Naive thymus-derived CD8-positive, alpha-beta T cell (primary cell): ENCODE measurements at regions of chr11 and their contacts with region 1.

Region 1: DNA sequence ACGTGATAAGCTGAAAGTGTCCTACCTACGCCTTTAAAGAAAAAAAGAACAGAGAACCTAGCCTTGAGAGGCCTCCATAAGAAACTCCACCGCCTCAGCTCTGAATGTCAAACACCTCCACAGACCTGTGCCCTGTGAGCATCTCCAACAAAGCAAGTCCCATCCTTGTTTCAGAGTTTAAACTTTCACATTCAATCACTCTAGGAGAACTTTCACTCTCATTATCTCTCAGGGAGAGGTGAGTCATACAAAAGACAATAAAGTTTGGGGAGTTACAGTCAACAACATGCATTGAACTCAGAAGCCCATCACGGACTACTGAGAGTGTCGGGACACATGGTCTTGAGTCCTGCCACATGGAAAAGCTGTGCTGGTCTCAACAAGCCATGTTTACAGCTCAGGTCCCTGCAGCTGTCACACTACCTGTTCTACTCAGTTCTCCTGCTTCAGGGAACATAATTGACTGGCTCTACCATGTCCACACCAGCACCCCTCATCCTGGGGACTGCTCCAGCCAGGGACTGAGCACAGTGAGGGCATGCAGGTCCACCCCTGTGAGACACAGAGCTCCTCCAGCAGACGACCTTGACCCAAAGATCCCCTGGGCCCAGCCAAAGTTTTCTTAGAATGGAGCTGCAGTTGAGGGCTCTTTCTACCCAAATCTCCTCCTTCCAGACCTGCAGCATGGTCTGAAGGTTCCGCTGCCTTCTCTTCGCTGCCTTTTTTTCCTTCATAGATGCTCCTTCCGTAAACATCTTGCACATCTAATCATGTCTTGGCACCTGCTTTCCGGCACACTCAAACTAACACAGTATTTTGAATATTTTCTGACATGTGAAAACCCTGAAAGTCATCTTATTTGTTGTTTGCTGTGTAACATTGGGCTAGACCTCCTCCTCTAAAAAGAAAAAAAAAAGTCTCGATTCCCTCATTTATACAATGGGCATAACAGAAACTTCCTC is 114.9 kb downstream of the ETS1 start:
- DNase-seq: peak in 6 of 10 donors; percentile 26 to 56 (median 50)
- ATAC-seq: peak; percentile 2 to 33
- H3K4me3 Mint-ChIP-seq: peak overlapping the region; percentile 75 to 93 (median 88)
- H3K27ac Mint-ChIP-seq: peak overlapping the region; percentile 93 to 99 (median 98)
- H3K4me1 Mint-ChIP-seq: peaks cover 67 to 100% (median 96%) of the 10 kb centered on the region in 4 donors
- H3K27me3 Mint-ChIP-seq: no peaks in the 10 kb centered on the region

Region 2: GRCh38 chr11:128389461-128389976 is 82.9 kb before region 1 on chr11:
- POLR2A ChIA-PET with region 1: no interaction called
- DNase-seq: no peak
- ATAC-seq: no peak
- H3K4me3 Mint-ChIP-seq: no peak overlapping the region
- H3K27ac Mint-ChIP-seq: peak overlapping the region in 3 of 10 donors; percentile 6 to 53 (median 45)
- H3K4me1 Mint-ChIP-seq: peaks cover 16 to 42% (median 23%) of the 10 kb centered on the region in 4 donors
- H3K27me3 Mint-ChIP-seq: no peaks in the 10 kb centered on the region

Region 3: DNA sequence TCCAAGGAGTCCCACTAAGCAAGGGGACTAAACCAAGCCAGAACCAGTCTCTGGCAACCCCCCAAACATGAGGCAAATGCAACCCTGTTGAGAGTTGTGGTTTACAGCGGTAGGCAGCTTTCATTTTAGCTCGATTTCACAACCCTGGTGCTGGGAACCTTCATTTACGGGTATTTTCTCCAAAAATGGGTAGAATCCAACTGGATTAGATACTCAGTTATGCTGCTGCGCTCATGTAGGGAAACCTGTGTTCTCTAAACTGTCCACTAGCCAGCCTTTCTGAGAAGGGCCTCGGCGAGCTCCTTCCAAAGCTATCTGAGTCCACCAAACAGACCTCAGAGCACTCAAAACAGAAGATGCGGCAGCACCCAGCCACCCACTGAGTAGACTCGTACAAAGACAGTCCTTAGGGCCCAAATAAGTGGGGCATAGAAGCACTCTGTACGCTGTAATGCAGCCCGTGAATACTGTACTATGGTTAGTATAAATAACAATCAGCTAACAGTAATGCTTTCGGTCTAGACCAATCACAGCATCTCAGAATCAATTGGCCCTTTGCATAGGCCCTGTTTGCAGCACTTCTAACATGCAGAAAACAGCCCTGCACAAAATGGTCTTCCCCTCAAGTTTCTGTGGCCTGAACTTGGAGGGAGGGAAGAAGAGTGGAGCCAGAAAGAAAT is 10.2 kb after region 1 on chr11:
- POLR2A ChIA-PET with region 1: interaction called, 348 read pairs
- DNase-seq: peak in 8 of 10 donors; percentile 70 to 85 (median 78)
- ATAC-seq: peak; percentile 65 to 82
- H3K4me3 Mint-ChIP-seq: peak overlapping the region; percentile 73 to 89 (median 82)
- H3K27ac Mint-ChIP-seq: peak overlapping the region; percentile 93 to 99 (median 98)
- H3K4me1 Mint-ChIP-seq: peaks cover 53 to 95% (median 95%) of the 10 kb centered on the region in 4 donors
- H3K27me3 Mint-ChIP-seq: no peaks in the 10 kb centered on the region

Region 4: GRCh38 chr11:128497061-128497775 is 24.8 kb after region 1 on chr11:
- POLR2A ChIA-PET with region 1: interaction called, 398 read pairs
- DNase-seq: no peak
- ATAC-seq: no peak
- H3K4me3 Mint-ChIP-seq: peak overlapping the region; percentile 82 to 95 (median 89)
- H3K27ac Mint-ChIP-seq: peak overlapping the region; percentile 91 to 98 (median 96)
- H3K4me1 Mint-ChIP-seq: peaks cover 62 to 100% (median 97%) of the 10 kb centered on the region in 4 donors
- H3K27me3 Mint-ChIP-seq: no peaks in the 10 kb centered on the region

Region 5: DNA sequence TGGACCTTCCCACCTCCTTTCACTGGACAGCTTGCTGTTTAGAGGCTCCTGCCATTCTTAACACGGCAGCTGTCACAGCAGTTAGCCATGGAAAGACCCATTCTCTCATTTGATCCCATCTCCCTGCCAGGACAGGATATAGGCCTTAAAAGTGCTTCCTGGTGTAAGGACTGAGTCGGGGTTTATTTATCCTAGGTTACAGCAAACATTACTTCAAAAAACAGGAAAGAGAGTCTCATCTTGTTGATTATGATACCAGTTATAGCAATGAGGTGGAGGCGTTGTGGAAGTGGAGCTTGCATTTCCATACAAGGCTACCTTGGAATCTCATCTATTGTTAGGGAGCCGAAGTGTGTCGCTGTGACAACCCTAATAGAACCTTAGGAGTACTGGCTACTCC is 132.3 kb after region 1 on chr11:
- POLR2A ChIA-PET with region 1: no interaction called
- DNase-seq: no peak
- ATAC-seq: no peak
- H3K4me3 Mint-ChIP-seq: no peak overlapping the region
- H3K27ac Mint-ChIP-seq: peak overlapping the region in 4 of 10 donors; percentile 6 to 56 (median 28)
- H3K4me1 Mint-ChIP-seq: peaks cover 32 to 78% (median 67%) of the 10 kb centered on the region in 4 donors
- H3K27me3 Mint-ChIP-seq: no peaks in the 10 kb centered on the region